HepG2 (cell line): ENCODE measurements at regions of chr18 and their contacts with region 1.

Region 1: GRCh38 chr18:5841518-5841917 is 53.8 kb downstream of the TMEM200C start:
- DNase-seq: no peak
- ATAC-seq: no peak
- H3K4me3 ChIP-seq: no peak overlapping the region
- H3K27ac ChIP-seq: no peak overlapping the region
- H3K4me1 ChIP-seq: no peaks in the 10 kb centered on the region
- H3K27me3 ChIP-seq: no peaks in the 10 kb centered on the region
- CTCF ChIP-seq: no peak
- EP300 ChIP-seq: no peak
- POLR2A ChIP-seq: no peak
- RAD21 ChIP-seq: no peak

Region 2: GRCh38 chr18:5073026-5073944 is 768.2 kb before region 1 on chr18:
- CTCF ChIA-PET with region 1: no interaction called
- POLR2A ChIA-PET with region 1: no interaction called
- in situ Hi-C with region 1: no loop called
- intact Hi-C with region 1: loop called (anchors 5 kb)
- DNase-seq: peak; percentile 31
- ATAC-seq: peak; percentile 78
- H3K4me3 ChIP-seq: no peak overlapping the region
- H3K27ac ChIP-seq: no peak overlapping the region
- H3K4me1 ChIP-seq: no peaks in the 10 kb centered on the region
- H3K27me3 ChIP-seq: 0 out of 5 replicates have a peak, but pooled peaks cover 0 to 2% of the 10 kb centered on the region in 2 experiments
- CTCF ChIP-seq: peak; percentile 82
- EP300 ChIP-seq: no peak
- POLR2A ChIP-seq: no peak
- RAD21 ChIP-seq: peak; percentile 60

Region 3: GRCh38 chr18:5600378-5601071 is 241.0 kb before region 1 on chr18:
- CTCF ChIA-PET with region 1: no interaction called
- POLR2A ChIA-PET with region 1: no interaction called
- in situ Hi-C with region 1: loop called (anchors 5 kb)
- intact Hi-C with region 1: loop called (anchors 1 kb)
- DNase-seq: peak; percentile 16
- ATAC-seq: no peak
- H3K4me3 ChIP-seq: no peak overlapping the region
- H3K27ac ChIP-seq: no peak overlapping the region
- H3K4me1 ChIP-seq: peaks cover 8% of the 10 kb centered on the region
- H3K27me3 ChIP-seq: 0 out of 5 replicates have a peak, but pooled peaks cover 0 to 1% of the 10 kb centered on the region in 2 experiments
- CTCF ChIP-seq: peak; percentile 26
- EP300 ChIP-seq: no peak
- POLR2A ChIP-seq: no peak
- RAD21 ChIP-seq: no peak